ENCODE measurements at regions of chr11 and their contacts with region 1.

Region 1: DNA sequence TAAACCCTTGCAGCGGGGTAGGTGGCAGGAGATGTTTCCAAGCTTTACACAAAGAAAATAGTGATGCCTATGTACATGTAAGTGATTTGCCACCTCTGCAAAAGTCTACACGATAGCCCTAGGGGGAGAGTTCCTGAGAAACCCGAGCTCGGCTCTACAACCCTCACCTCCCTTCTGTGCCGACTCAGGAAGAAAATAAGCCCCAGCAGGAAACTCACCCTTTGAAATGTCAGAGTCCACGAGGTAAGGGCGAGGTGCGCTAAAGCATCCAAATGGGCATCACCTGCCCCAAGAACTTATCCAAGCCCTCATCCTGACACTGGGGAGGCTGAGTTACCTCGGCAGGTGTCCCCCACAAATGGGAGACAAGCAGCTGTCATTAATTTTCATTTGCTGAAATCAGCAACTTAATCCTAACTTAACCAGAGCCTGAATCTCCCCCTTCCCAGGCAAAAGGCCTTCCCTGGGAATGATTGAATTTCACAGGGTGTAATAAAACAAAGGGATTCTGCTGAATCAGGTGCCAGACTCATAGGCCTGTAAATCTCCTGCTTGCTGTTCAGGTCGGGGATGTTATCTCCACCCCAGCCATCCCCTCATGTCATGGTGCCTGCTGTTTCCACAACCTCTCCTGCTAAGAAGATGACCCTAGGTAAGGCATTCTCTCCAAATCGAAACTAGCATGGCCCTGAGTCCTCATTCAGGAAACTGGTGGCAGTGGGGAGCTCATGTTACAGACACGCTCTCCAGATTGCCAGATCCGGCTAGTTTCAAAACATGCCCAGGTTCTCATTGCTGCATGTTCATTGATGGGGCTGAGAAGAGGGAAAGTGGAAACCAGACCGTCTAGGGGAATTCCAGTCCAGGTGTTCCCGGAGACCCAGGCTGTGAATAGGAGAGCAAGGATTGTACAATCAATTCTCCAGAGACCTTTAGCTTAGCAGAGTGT is 105.3 kb upstream of the KIRREL3 start:
- DNase-seq: peak; percentile 64
- H3K4me3 Mint-ChIP-seq: no peak overlapping the region
- H3K27ac Mint-ChIP-seq: peak overlapping the region; percentile 69
- H3K4me1 Mint-ChIP-seq: peaks cover 10% of the 10 kb centered on the region
- H3K27me3 Mint-ChIP-seq: no peaks in the 10 kb centered on the region
- CTCF ChIP-seq: no peak

Region 2: DNA sequence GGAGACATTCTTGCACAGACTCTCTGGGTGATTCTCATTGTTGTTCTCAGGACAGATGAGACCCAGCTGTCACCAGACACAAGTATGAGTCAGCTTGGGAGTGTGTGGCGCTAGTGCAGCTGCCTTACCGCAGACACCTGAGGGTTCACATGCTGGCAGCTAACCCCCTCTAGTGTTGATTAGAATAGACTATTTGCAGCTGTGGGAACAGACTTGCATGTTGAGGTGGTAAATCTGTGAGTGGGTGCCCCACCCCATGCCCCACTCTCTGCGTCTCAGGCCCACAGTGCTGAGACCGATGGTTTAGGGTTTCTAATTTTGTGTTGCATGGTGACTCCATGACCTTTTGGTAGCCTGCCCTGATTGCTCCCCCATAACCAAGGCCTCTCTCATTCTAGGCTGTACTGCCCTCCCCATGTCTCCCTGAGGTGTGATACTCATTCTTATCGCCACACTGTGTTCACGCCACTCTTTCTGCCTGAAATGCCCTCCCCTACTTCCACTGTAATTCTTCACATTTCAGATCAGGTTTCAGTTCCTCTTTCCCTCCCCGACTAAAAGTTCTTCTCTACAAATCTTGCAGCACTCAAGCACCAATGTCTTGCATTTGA is 31.6 kb before region 1 on chr11:
- CTCF ChIA-PET with region 1: no interaction called
- intact Hi-C with region 1: no loop called
- DNase-seq: peak; percentile 60
- H3K4me3 Mint-ChIP-seq: no peak overlapping the region
- H3K27ac Mint-ChIP-seq: no peak overlapping the region
- H3K4me1 Mint-ChIP-seq: peaks cover 15% of the 10 kb centered on the region
- H3K27me3 Mint-ChIP-seq: no peaks in the 10 kb centered on the region
- CTCF ChIP-seq: peak; percentile 28

Region 3: DNA sequence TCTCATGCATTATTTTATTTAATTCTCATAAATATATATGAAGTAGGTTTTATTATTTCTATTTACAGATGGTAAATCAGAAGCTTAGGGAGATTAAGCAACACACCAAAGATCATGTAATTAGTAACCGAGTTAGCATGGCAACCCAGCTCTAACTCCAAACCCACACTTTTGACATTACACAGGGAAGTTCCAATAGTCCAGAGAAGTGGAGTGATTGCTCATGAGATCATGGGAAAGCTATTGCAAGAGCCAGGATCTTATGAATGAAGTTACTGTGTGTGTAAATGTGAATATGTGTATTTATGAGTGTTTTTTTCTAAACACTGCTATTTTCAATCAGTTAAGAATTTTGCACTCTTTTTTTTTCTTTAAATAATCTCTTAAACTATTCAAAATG is 120.5 kb after region 1 on chr11:
- CTCF ChIA-PET with region 1: no interaction called
- intact Hi-C with region 1: loop called (anchors 10 kb)
- DNase-seq: no peak
- H3K4me3 Mint-ChIP-seq: no peak overlapping the region
- H3K27ac Mint-ChIP-seq: no peak overlapping the region
- H3K4me1 Mint-ChIP-seq: no peaks in the 10 kb centered on the region
- H3K27me3 Mint-ChIP-seq: no peaks in the 10 kb centered on the region
- CTCF ChIP-seq: no peak

Measured in Calu3 (cell line).